Endothelial cell of umbilical vein (primary cell): ENCODE measurements at regions of chr14 and their contacts with region 1.

Region 1: DNA sequence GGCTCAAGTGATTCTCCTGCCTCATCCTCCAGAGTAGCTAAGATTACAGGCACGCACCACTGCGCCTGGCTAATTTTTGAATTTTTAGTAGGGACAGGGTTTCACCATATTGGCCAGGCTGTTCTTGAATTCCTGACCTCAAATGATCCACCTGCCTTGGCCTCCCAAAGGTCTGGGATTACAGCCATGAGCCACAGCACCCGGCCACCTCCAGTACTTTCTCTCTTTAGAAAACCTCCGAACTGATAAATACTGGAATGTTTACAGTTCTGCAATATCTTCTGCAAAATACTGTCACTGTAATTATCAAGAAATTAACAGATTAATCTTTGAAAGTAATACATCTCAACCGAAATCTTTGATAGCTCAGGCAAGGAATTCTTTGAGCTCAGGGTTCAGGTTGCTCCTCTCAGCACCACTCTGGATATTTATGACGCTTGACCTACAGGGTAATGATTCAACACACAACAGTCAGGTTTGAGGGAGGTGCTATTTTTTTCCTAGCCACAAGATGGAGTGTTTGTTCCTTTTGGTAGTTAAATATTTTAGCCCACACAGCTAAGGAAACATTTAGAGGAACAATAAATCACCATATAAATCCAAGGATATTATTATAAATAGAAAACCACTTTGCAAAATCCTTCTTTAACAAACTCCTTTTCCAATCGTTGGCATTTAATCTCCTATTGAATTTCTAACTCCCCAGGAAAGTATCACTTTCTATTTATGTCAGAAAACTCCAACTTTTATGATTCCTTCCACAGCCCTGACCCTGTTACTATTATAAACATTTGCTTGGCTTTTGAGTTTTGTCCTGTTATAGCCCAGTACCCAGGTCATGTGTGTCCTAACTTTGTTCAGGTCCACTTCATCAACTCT is 48.6 kb upstream of the GTF2A1 start:
- DNase-seq: peak; percentile 69
- H3K4me3 ChIP-seq: no peak overlapping the region
- H3K27ac ChIP-seq: no peak overlapping the region
- H3K4me1 ChIP-seq: no peaks in the 10 kb centered on the region
- H3K27me3 ChIP-seq: no peaks in the 10 kb centered on the region
- CTCF ChIP-seq: peak; percentile 39 to 55
- POLR2A ChIP-seq: no peak

Region 2: DNA sequence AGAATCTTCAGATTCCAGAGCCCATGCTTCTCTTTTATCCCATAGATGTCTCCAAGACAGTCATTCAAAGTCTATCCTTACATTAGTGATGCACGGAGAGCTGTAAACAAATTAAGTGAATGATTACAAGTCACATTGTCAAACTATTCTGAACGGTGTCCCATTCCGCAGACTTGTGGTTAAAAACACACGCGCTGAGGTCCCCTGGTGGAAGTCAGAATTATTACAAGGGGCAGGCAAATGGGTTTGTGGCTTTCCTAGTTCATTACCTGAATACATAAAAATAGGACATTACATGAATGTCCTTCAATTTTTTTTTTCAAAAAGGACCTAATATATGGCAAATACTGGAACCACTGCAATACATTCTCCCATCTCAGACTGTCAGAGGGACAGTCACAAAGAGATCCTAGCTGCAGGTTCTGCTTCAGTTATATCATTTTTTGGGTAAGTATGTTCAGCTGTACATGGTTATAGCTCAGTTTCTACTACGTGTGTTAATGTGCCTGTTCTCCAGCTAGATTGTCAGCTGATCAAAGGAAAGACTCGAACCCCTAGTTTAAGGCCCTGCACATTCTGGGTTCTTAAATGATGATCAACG is 183.9 kb after region 1 on chr14:
- CTCF ChIA-PET with region 1: interaction called, 76 read pairs
- POLR2A ChIA-PET with region 1: no interaction called
- dilution Hi-C with region 1: no loop called
- intact Hi-C with region 1: loop called (anchors 1 kb)
- DNase-seq: peak; percentile 48
- H3K4me3 ChIP-seq: no peak overlapping the region
- H3K27ac ChIP-seq: no peak overlapping the region
- H3K4me1 ChIP-seq: no peaks in the 10 kb centered on the region
- H3K27me3 ChIP-seq: peaks cover 2 to 9% of the 10 kb centered on the region in 2 experiments
- CTCF ChIP-seq: peak; percentile 69 to 73
- POLR2A ChIP-seq: no peak

Region 3: GRCh38 chr14:81464247-81465002 is 195.1 kb after region 1 on chr14:
- CTCF ChIA-PET with region 1: interaction called, 75 read pairs
- POLR2A ChIA-PET with region 1: no interaction called
- dilution Hi-C with region 1: no loop called
- intact Hi-C with region 1: no loop called
- DNase-seq: peak; percentile 79
- H3K4me3 ChIP-seq: peak overlapping the region; percentile 38 to 86 (median 41)
- H3K27ac ChIP-seq: no peak overlapping the region
- H3K4me1 ChIP-seq: no peaks in the 10 kb centered on the region
- H3K27me3 ChIP-seq: no peaks in the 10 kb centered on the region
- CTCF ChIP-seq: peak; percentile 68 to 82
- POLR2A ChIP-seq: no peak